Colonic mucosa (tissue), 4 donors: ENCODE measurements at regions of chr12 and their contacts with region 1.

Region 1: DNA sequence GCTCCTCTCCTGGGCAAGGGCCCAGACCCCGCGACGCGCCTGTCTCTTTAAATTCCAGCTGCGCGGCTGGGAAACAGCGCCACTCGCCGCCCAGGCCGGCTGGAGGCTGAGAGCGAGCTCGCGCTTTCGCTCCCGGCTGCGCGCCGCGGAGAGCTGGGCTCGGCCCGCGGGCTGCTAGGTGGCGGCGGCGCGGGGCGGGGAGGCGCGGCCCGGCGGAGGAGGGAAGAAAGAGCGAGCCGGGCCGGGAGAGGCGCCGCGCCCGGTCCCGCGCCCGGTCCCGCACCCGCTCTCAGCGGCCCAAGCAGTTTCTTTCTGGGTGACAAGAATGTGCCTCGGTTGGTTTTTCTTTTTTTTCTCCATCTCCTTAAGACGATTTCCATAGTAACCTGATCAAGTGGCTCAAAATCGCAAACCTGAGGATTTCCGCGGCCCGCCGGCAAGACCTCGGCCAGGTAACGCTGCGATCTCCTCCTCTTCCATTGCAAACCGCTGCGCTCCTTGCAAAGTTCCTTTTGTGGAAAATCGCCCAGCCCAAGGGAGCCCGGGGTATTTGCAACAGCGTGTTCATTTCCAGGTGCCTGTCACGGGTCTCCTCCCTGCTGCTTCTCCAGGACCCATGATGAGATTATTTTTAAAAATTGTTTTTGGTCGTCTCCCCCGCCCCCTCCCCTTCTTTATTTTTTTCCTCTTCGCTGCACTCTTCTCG is 259.5 kb upstream of the E2F7 start:
- DNase-seq: peak; percentile 70
- H3K4me3 ChIP-seq: peak overlapping the region; percentile 38
- H3K27ac ChIP-seq: no peak overlapping the region
- H3K4me1 ChIP-seq: no peaks in the 10 kb centered on the region
- H3K27me3 ChIP-seq: peaks cover 10% of the 10 kb centered on the region
- CTCF ChIP-seq: no peak

Region 2: DNA sequence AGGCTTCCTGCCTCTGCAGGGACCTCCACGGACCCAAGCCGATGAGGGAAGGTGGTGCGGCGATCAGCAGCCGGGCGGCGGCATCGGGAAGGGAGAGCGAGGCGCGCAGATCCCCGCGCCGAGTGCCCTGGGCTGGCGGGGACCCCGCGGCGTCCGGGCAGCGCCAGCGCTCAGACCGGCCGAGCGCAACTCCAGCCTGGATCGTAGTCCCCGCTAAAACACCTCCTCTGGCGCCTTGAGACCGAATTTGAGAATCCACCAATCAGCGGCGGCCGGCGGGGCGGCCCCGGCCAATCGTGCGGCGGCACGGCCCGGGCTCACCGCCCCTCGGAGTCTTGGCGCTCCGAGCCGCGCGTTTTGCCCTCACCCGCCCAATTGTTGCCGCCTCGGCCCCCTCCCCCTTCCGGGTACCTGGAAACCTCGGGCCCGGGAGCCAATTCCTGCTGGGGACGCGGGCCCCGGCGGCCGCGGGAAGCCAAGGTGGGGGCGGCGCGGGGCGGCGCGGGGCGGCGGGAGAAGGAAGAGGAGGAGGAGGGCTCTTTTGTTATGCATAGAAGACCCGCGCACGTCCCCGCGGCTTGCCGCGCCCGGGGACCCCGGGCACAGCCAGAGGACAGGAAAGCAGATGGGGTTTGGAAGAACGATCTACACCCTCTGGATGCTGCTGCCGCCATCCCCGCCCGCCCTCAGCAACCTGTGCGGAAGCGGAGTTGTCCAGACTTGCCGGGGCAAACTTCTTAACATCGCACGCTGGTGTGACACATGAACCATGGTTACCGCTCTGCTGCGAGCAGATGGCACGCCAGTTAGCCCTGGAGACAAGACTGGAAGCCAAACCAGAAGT is 259.3 kb before region 1 on chr12 and contains the start of gene E2F7:
- intact Hi-C with region 1: loop called (anchors 10 kb)
- DNase-seq: peak; percentile 93
- H3K4me3 ChIP-seq: peak within 1 kb of the TSS; percentile 94
- H3K27ac ChIP-seq: no peak within 1 kb of the TSS
- H3K4me1 ChIP-seq: no peaks in the 10 kb centered on the region
- H3K27me3 ChIP-seq: no peaks in the 10 kb centered on the region
- CTCF ChIP-seq: no peak
- total RNA-seq, gene E2F7: 2.4 to 9.1 TPM

Region 3: DNA sequence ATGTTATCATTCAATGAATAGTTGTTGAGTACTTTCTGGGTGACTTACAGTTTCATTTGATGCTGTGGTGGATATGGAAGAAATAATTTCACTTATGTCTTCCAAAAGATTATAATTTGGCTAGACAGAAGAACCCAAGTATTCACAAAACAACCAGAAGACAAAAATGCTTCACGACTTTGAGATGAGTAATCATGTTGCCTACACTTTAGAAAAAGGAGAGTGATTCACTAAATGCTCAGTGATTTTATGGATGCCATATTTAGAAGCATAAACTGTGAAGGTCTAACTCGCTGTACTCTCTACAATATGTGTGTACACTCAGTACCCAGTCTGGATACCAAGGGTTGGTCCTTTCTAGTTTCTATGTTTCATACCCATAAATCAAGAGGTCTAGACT is 158.2 kb before region 1 on chr12:
- intact Hi-C with region 1: loop called (anchors 10 kb)
- DNase-seq: no peak
- H3K4me3 ChIP-seq: no peak overlapping the region
- H3K27ac ChIP-seq: no peak overlapping the region
- H3K4me1 ChIP-seq: no peaks in the 10 kb centered on the region
- H3K27me3 ChIP-seq: peaks cover 3% of the 10 kb centered on the region
- CTCF ChIP-seq: no peak

Region 4: GRCh38 chr12:77204091-77204490 is 120.8 kb before region 1 on chr12:
- intact Hi-C with region 1: loop called (anchors 10 kb)
- DNase-seq: no peak
- H3K4me3 ChIP-seq: no peak overlapping the region
- H3K27ac ChIP-seq: no peak overlapping the region
- H3K4me1 ChIP-seq: no peaks in the 10 kb centered on the region
- H3K27me3 ChIP-seq: no peaks in the 10 kb centered on the region
- CTCF ChIP-seq: no peak